Activated CD4-positive, alpha-beta memory T cell treated with anti-CD3 and anti-CD28 coated beads, Interleukin-2, amount 10 ng/mL, durations not matched to agents 7 days and 5 days (primary cell): ENCODE measurements at regions of chr18 and their contacts with region 1.

Region 1: DNA sequence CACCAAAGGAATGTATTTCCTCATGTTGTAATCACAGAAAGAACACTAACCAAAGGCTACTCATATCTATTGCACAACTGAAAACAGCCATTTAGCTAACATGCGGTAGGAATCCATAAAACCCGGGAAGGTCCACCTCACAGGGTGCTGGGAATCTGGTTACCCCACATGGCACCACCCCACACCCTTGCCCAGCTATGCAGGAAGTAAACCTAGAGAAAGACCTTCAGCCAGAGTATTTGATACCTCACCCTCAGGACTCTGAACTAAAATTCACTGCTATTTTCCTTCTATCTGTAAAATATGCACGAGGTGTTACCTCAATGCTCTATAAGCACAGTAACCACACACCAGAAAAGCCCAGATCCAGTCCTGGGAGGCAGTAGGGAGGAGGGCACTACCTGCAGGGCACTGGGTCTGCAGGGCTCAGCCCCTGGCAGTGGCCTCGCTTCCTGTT is 45.8 kb downstream of the PTPN2 start:
- DNase-seq: peak; percentile 37
- H3K4me3 Mint-ChIP-seq: peak overlapping the region; percentile 78
- H3K27ac Mint-ChIP-seq: peak overlapping the region; percentile 100
- H3K4me1 Mint-ChIP-seq: peaks cover 66% of the 10 kb centered on the region
- H3K27me3 Mint-ChIP-seq: no peaks in the 10 kb centered on the region

Region 2: DNA sequence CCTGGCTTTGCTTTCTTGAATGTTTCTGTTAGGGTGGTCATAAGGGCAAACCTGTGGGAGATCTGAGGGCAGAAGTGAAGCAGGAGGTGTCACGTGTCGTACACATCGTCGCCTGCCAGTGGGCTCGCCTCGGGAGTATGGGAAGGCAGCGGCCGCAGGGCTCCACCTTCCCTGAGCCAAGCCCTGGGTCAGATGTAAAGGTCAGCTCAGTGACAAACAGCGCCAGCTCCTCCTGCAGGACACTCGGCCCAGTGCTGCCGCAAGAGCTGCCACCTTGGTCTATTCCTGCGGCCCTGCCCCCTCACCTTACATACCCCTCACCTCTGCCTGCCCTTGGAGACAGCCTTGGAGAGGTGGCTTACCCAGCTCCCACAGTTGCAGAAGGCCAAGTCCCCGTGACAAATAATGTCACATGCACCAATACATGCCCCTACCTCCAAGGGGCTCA is 71.2 kb before region 1 on chr18:
- CTCF ChIA-PET with region 1: no interaction called
- POLR2A ChIA-PET with region 1: no interaction called
- DNase-seq: no peak
- H3K4me3 Mint-ChIP-seq: no peak overlapping the region
- H3K27ac Mint-ChIP-seq: no peak overlapping the region
- H3K4me1 Mint-ChIP-seq: peaks cover 6% of the 10 kb centered on the region
- H3K27me3 Mint-ChIP-seq: no peaks in the 10 kb centered on the region

Region 3: GRCh38 chr18:12777500-12777944 is 60.7 kb before region 1 on chr18:
- CTCF ChIA-PET with region 1: no interaction called
- POLR2A ChIA-PET with region 1: interaction called, 11 read pairs
- DNase-seq: no peak
- H3K4me3 Mint-ChIP-seq: peak overlapping the region; percentile 47
- H3K27ac Mint-ChIP-seq: no peak overlapping the region
- H3K4me1 Mint-ChIP-seq: peaks cover 9% of the 10 kb centered on the region
- H3K27me3 Mint-ChIP-seq: no peaks in the 10 kb centered on the region

Region 4: DNA sequence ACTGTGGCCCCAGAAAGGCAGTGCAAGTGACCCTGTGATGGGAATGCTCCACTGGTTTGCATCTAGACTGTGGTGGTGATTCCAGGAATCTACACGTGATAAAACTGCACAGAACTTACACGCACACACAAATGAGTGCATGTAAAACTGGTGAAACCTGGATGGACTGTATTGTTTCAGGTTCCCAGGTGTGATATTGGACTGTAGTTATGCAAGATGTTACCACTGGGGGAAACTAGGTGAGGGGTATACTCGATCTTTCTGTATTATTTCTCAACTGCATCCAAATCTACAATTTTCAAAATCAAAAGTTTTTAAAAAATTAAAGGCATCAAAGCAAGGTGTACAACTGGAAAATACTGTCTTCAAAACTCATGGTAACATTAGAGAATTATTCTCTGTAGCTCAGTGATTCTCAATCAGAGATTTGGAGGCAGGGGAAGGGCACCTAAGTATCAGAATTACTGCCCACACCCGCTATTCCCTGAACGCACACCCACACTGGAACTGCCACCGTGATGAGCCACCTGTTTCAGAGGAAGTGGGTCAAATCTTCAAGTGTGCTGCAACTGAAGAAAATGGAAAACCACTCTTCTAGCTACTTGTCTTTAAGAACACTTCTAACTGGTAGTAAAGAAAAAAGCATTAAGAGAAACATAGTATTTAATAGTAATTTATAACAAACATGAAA is 19.2 kb after region 1 on chr18:
- CTCF ChIA-PET with region 1: interaction called, 3 read pairs
- POLR2A ChIA-PET with region 1: interaction called, 16 read pairs
- DNase-seq: peak; percentile 35
- H3K4me3 Mint-ChIP-seq: peak overlapping the region; percentile 39
- H3K27ac Mint-ChIP-seq: peak overlapping the region; percentile 80
- H3K4me1 Mint-ChIP-seq: peaks cover 78% of the 10 kb centered on the region
- H3K27me3 Mint-ChIP-seq: no peaks in the 10 kb centered on the region

Region 5: DNA sequence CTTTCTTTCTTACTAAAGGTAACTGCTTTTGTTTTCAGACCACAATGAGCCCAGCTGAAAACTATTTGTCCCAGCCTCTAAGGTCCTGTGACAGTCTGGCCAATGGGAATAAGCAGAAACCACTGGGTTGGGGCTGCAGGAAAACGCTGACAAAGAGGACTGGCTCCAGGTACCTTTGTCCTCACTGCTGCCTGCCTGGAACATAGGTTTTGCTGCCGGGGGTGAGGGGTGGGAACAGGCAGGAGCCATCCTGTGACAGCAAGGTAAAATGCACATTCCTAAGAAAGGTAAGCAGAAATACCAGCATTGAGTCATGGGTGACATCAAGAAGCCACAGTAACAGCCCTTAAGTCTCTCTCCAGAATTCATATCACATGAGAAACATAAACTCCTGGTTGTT is 24.3 kb after region 1 on chr18:
- CTCF ChIA-PET with region 1: interaction called, 3 read pairs
- POLR2A ChIA-PET with region 1: interaction called, 16 read pairs
- DNase-seq: no peak
- H3K4me3 Mint-ChIP-seq: no peak overlapping the region
- H3K27ac Mint-ChIP-seq: no peak overlapping the region
- H3K4me1 Mint-ChIP-seq: peaks cover 56% of the 10 kb centered on the region
- H3K27me3 Mint-ChIP-seq: no peaks in the 10 kb centered on the region